CD8-positive, alpha-beta T cell (primary cell): ENCODE measurements at regions of chr12 and their contacts with region 1.

Region 1: GRCh38 chr12:49707128-49707811 is at the start of gene FMNL3:
- DNase-seq: peak; percentile 98 to 100 (median 99)
- ATAC-seq: peak; percentile 93
- H3K4me3 ChIP-seq: peak within 1 kb of the TSS; percentile 70 to 84
- H3K4me3 Mint-ChIP-seq: peak within 1 kb of the TSS; percentile 92
- H3K27ac ChIP-seq: peak within 1 kb of the TSS; percentile 55 to 77
- H3K27ac Mint-ChIP-seq: peak within 1 kb of the TSS; percentile 90
- H3K4me1 ChIP-seq: peaks cover 32% of the 10 kb centered on the region
- H3K4me1 Mint-ChIP-seq: peaks cover 47% of the 10 kb centered on the region
- H3K27me3 ChIP-seq: no peaks in the 10 kb centered on the region
- H3K27me3 Mint-ChIP-seq: peaks cover 3% of the 10 kb centered on the region
- CTCF ChIP-seq: peak; percentile 97
- total RNA-seq, gene FMNL3: 27.9 to 31.9 TPM

Region 2: DNA sequence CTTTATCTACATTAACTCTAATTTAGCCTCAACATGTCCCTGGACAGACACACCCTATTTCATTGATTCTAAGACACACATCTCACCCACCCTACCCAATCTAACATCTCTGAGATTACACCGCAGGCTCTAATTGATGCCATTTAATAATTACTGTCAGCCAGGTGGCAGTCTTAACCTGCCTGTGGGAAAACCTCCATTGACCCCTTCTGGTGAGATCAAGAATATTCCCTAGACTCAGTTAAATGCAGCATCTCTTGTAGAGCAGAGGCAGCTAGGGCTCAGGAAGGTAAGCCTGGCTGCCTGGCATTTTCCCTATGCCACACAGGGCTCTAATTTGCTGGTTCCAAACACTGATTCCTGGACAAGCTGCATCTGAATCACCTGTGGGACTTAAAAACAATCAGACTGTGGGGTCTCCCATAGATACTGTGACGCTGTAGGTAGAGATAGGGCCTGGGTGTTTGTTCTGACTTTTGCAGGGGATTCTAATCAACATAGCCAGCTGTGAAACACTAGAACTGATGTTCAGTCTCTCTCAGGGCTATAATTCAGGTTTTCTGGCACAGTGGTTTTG is 153.7 kb before region 1 on chr12:
- CTCF ChIA-PET with region 1: interaction called, 3 read pairs
- POLR2A ChIA-PET with region 1: no interaction called
- intact Hi-C with region 1: loop called (anchors 1 to 5 kb)
- DNase-seq: peak in 2 of 9 experiments; percentile 60 to 70
- ATAC-seq: peak; percentile 68
- H3K4me3 ChIP-seq: no peak overlapping the region
- H3K4me3 Mint-ChIP-seq: no peak overlapping the region
- H3K27ac ChIP-seq: no peak overlapping the region
- H3K27ac Mint-ChIP-seq: peak overlapping the region; percentile 7
- H3K4me1 ChIP-seq: peaks cover 10% of the 10 kb centered on the region
- H3K4me1 Mint-ChIP-seq: peaks cover 23% of the 10 kb centered on the region
- H3K27me3 ChIP-seq: peaks cover 0 to 4% of the 10 kb centered on the region in 2 experiments
- H3K27me3 Mint-ChIP-seq: no peaks in the 10 kb centered on the region
- CTCF ChIP-seq: peak; percentile 53

Region 3: GRCh38 chr12:49623142-49623904 is 83.9 kb before region 1 on chr12 and contains the start of gene PRPF40B:
- CTCF ChIA-PET with region 1: interaction called, 9 read pairs
- POLR2A ChIA-PET with region 1: no interaction called
- intact Hi-C with region 1: loop called (anchors 1 kb)
- DNase-seq: peak; percentile 68 to 92 (median 84)
- ATAC-seq: peak; percentile 78
- H3K4me3 ChIP-seq: peak within 1 kb of the TSS; percentile 56 to 82
- H3K4me3 Mint-ChIP-seq: peak within 1 kb of the TSS; percentile 88
- H3K27ac ChIP-seq: peak within 1 kb of the TSS; percentile 56 to 63
- H3K27ac Mint-ChIP-seq: peak within 1 kb of the TSS; percentile 91
- H3K4me1 ChIP-seq: peaks cover 34% of the 10 kb centered on the region
- H3K4me1 Mint-ChIP-seq: peaks cover 27% of the 10 kb centered on the region
- H3K27me3 ChIP-seq: no peaks in the 10 kb centered on the region
- H3K27me3 Mint-ChIP-seq: no peaks in the 10 kb centered on the region
- CTCF ChIP-seq: peak; percentile 46
- total RNA-seq, gene PRPF40B: 3.4 to 4.2 TPM

Region 4: DNA sequence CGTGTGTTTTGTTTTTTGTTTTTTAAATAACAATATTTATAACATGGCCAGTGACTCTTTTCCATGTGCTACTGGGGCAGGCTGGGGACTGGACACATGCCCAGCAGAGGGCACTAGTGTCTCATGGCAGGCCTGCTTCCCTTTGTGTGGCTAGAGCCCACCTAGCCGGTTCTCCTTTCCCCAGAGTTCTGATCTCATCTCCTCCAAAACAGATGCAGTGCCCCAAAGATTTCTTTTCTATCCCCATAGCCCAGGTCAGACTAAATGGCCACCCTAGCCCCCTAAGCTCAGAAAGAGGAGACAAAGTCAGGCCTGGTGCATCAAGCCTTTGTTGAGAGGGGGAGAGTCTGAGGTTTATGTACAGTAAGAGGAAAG is 62.7 kb before region 1 on chr12:
- CTCF ChIA-PET with region 1: interaction called, 493 read pairs
- POLR2A ChIA-PET with region 1: interaction called, 15 read pairs
- intact Hi-C with region 1: loop called (anchors 1 kb)
- DNase-seq: peak; percentile 71 to 91 (median 87)
- ATAC-seq: peak; percentile 98
- H3K4me3 ChIP-seq: no peak overlapping the region
- H3K4me3 Mint-ChIP-seq: no peak overlapping the region
- H3K27ac ChIP-seq: peak overlapping the region in 1 of 2 experiments; percentile 57
- H3K27ac Mint-ChIP-seq: peak overlapping the region; percentile 92
- H3K4me1 ChIP-seq: peaks cover 12% of the 10 kb centered on the region
- H3K4me1 Mint-ChIP-seq: peaks cover 35% of the 10 kb centered on the region
- H3K27me3 ChIP-seq: no peaks in the 10 kb centered on the region
- H3K27me3 Mint-ChIP-seq: no peaks in the 10 kb centered on the region
- CTCF ChIP-seq: peak; percentile 93

Region 5: DNA sequence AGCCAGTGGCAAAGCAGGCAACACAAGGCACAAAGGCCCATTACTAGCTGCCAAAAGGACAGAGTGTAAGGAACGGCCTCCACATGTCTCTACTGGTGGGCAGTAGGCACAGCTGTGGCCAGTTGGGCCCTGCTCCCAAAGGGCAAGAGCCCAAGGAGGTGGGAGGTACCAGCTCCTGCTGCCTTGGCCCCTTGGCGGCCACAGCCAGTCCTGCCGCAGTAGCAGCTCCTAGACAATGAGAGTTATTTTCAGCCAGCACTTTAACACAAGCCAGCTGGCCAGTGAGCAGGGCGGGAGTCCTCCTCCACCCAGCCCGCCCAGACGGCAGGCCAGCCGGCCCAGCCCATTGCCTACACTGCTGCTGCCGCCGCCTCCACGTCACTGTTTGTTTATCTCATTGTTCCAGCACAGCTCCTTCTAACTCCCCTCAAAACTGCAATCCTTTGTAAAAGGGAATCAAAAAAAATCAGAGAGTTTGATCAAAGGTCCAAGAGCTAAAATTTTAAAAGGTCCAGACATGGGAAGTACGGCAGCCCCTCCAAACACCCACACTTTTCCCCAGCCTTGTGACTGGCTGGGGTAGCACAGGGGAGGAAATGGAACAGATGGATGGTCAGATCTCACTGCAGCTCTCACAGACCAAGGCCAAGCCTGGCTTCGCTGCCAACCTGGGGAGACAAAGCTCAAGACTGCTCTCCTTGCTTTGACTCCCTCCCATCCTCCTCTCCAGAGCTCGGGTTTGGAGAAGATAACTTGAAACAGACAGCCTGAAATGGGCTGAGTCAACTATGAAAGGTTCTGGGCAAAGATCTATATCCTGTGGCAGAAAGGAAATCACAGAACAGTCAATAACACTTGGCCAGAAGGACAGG is 33.6 kb before region 1 on chr12:
- CTCF ChIA-PET with region 1: interaction called, 65 read pairs
- POLR2A ChIA-PET with region 1: interaction called, 25 read pairs
- intact Hi-C with region 1: loop called (anchors 1 to 2 kb)
- DNase-seq: peak in 3 of 9 experiments; percentile 18 to 30 (median 26)
- ATAC-seq: no peak
- H3K4me3 ChIP-seq: no peak overlapping the region
- H3K4me3 Mint-ChIP-seq: peak overlapping the region; percentile 26
- H3K27ac ChIP-seq: peak overlapping the region in 1 of 2 experiments; percentile 92
- H3K27ac Mint-ChIP-seq: peak overlapping the region; percentile 98
- H3K4me1 ChIP-seq: peaks cover 66% of the 10 kb centered on the region
- H3K4me1 Mint-ChIP-seq: peaks cover 84% of the 10 kb centered on the region
- H3K27me3 ChIP-seq: no peaks in the 10 kb centered on the region
- H3K27me3 Mint-ChIP-seq: no peaks in the 10 kb centered on the region
- CTCF ChIP-seq: no peak

Region 6: DNA sequence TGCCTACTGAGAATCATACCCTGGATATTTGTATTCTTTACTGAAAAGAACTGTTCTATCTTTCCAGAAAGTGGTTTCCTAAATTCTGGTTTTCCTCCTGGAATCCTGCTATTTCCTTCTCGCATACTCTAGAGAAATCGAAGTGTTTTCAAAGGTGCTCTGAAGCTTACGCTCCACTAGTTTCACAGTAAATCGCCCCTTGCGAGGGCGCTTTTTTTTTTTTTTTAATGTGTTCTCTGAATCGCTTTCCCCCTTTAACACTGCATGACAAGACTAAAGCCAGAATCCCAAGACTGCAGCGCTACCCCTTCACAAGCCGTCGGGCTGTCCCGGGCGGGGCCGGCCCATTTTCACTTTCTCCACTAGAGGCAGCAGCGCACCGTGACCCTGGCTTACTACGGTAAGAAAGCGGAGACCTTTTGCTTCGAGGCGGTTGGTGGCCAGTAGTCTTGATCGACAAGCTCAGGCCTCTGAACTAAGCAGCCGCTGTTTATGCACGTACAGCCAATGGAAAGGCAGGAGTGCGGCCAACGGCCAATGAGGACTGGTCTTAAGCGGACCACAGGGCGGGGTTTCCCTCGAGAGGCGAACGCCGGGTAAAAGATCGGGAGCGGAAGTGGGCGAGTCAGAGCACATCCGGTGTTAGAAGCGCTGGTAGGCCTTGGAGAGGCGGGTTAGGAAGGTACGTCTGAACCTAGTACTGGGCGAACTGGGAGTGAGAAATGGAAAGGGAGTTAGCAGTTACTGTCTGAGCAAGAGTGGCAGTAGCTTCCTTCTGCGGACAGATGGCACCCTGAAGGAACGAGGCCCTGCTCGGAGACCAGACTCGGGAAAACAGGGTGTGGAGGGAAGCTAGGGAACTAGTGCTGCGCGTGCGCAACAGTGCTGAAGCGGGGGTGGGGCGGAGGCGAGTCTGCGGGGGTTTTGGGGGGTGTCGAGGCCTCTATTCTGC is 33.9 kb after region 1 on chr12 and contains the start of gene TMBIM6:
- CTCF ChIA-PET with region 1: interaction called, 10 read pairs
- POLR2A ChIA-PET with region 1: interaction called, 3 read pairs
- intact Hi-C with region 1: loop called (anchors 1 kb)
- DNase-seq: peak; percentile 96 to 100 (median 98)
- ATAC-seq: peak; percentile 86
- H3K4me3 ChIP-seq: peak within 1 kb of the TSS; percentile 63 to 88
- H3K4me3 Mint-ChIP-seq: peak within 1 kb of the TSS; percentile 93
- H3K27ac ChIP-seq: peak within 1 kb of the TSS; percentile 96 to 99
- H3K27ac Mint-ChIP-seq: peak within 1 kb of the TSS; percentile 98
- H3K4me1 ChIP-seq: peaks cover 38% of the 10 kb centered on the region
- H3K4me1 Mint-ChIP-seq: peaks cover 41% of the 10 kb centered on the region
- H3K27me3 ChIP-seq: no peaks in the 10 kb centered on the region
- H3K27me3 Mint-ChIP-seq: no peaks in the 10 kb centered on the region
- CTCF ChIP-seq: peak; percentile 93
- total RNA-seq, gene TMBIM6: 289 to 309 TPM